ENCODE measurements at regions of chr6 and their contacts with region 1.

Region 1: DNA sequence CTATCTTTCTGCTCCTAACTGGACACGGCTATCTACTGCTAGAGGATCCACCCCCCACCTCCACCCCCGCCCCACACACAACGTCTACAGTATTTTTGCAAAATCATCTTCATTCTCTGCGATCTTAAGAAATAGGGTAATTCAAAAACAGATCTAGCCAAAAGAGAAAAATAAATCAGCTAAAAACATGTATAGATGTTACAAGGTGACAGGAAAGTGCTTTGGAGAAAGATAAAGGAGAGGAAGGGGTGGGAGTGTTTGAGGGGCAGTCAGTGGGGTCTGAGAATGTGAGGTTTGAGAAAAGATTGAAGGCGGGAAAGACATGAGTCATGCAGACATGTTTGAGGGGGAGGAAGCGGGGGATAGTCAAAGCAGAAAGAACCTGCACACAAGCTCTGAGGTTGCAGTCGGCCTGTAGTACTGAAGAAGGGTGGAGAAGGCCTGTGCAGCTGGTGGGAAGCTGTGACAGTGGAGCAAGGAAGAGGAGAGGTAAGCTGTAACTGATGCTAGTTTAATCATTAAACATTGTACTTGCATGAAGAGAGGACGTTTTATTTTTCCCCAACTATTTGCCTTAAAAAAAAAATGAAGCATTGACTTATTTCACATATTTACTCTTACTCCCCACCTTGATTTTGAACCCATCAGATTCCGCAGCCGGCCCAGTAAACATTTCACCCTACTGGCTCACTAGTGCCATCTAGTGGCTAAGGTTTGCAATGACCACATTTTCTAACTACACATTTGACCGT is 332.6 kb downstream of the ADGRB3 start:
- DNase-seq: peak; percentile 54
- H3K4me3 ChIP-seq: no peak overlapping the region
- H3K27ac ChIP-seq: no peak overlapping the region
- H3K4me1 ChIP-seq: no peaks in the 10 kb centered on the region
- H3K27me3 ChIP-seq: no peaks in the 10 kb centered on the region
- CTCF ChIP-seq: peak; percentile 70 to 90 (median 86)
- EP300 ChIP-seq: no peak
- POLR2A ChIP-seq: no peak

Region 2: GRCh38 chr6:68634726-68635411 is 332.9 kb before region 1 on chr6 and contains the start of gene ADGRB3:
- in situ Hi-C with region 1: loop called in 1 of 4 experiments (anchors 25 kb)
- intact Hi-C with region 1: no loop called
- DNase-seq: peak; percentile 60
- H3K4me3 ChIP-seq: peak within 1 kb of the TSS; percentile 46 to 59 (median 52)
- H3K27ac ChIP-seq: peak within 1 kb of the TSS; percentile 64 to 78 (median 67)
- H3K4me1 ChIP-seq: peaks cover 0 to 18% (median 13%) of the 10 kb centered on the region in 4 donors
- H3K27me3 ChIP-seq: peaks cover 59% of the 10 kb centered on the region
- CTCF ChIP-seq: no peak
- EP300 ChIP-seq: no peak
- POLR2A ChIP-seq: no peak
- total RNA-seq, gene ADGRB3: 0.37 to 20.5 (median 2.2) TPM